Transverse colon (tissue), 4 donors: ENCODE measurements at regions of chr5 and their contacts with region 1.

Region 1: GRCh38 chr5:37889612-37890317 is 49.9 kb upstream of the GDNF start:
- DNase-seq: no peak
- H3K4me3 ChIP-seq: no peak overlapping the region
- H3K27ac ChIP-seq: no peak overlapping the region
- H3K4me1 ChIP-seq: peaks cover 0 to 9% (median 0%) of the 10 kb centered on the region in 4 donors
- H3K27me3 ChIP-seq: no peaks in the 10 kb centered on the region
- CTCF ChIP-seq: no peak
- EP300 ChIP-seq: no peak
- POLR2A ChIP-seq: no peak

Region 2: GRCh38 chr5:36459176-36460135 is 1430.3 kb before region 1 on chr5:
- in situ Hi-C with region 1: no loop called
- intact Hi-C with region 1: loop called (anchors 5 kb)
- DNase-seq: no peak
- H3K4me3 ChIP-seq: no peak overlapping the region
- H3K27ac ChIP-seq: no peak overlapping the region
- H3K4me1 ChIP-seq: no peaks in the 10 kb centered on the region
- H3K27me3 ChIP-seq: no peaks in the 10 kb centered on the region
- CTCF ChIP-seq: no peak
- EP300 ChIP-seq: no peak
- POLR2A ChIP-seq: no peak

Region 3: DNA sequence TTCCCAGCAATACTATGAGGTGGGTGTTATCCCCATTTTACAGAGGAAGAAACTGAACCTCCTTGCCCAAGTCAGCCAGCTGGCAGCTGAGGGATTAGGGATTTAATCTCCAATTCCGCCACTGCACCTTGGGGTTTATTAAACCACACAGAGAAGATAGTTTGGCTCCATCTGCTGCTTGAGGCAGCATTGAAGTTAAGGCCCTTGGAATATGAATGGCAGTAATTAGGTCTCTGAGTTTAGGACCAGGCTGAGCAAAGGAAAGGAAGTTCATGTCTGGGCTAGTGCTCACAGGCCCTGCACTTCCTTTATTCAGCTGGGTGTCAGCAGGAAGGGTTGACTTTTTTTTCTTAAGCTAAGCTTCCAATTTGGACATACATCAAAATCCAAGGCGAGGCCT is 37.0 kb after region 1 on chr5:
- in situ Hi-C with region 1: no loop called
- intact Hi-C with region 1: no loop called
- DNase-seq: no peak
- H3K4me3 ChIP-seq: no peak overlapping the region
- H3K27ac ChIP-seq: no peak overlapping the region
- H3K4me1 ChIP-seq: no peaks in the 10 kb centered on the region
- H3K27me3 ChIP-seq: no peaks in the 10 kb centered on the region
- CTCF ChIP-seq: no peak
- EP300 ChIP-seq: no peak
- POLR2A ChIP-seq: no peak